ENCODE measurements at regions of chr14 and their contacts with region 1.

Region 1: GRCh38 chr14:77760381-77761246 is at the start of gene SNW1:
- DNase-seq: peak; percentile 96
- ATAC-seq: peak; percentile 96
- total RNA-seq, gene SNW1: 49.0 TPM

Region 2: GRCh38 chr14:77799863-77800730 is 39.5 kb after region 1 on chr14 and contains the start of gene ADCK1:
- intact Hi-C with region 1: loop called (anchors 5 kb)
- DNase-seq: peak; percentile 95
- ATAC-seq: peak; percentile 96
- total RNA-seq, gene ADCK1: 8.7 TPM

Region 3: DNA sequence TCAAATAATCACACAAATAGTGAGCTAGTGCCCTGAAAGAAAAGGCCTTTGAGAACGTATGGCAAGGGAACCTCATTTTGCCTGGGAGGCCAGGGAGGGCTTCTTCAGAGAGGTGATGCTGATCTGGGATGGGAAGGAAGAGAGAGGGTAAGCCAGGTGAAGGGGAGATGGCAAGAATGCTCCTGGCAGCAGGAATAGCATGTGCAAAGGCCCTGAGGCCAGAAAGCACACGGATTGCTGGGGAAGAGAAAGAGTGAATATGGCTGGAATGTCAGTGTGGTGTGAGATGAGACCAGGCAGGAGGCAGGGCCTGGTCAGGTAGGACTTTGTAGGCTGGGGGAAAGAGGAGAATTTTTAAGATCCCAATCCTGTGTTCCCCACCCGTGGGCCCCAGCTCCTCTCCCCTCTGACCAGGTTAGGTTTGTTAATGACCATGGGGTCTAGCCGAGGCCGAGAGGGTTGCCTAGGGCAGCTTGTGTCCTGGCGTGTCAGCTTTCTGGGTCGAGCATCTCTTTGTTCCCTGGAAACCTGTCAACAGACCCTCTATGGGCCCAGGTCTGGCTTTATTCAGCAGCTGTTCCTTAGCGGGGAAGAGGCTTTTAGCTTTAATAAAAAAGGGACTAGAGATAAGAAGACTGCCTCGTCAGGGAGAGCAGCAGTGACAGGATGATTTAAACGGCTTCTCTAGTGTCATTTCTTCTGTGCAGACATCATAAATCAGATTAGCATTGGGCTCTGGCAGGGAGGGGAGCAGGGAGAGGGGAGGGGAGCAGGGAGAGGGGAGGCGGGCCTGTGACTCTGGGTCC is 162.7 kb after region 1 on chr14:
- intact Hi-C with region 1: no loop called
- DNase-seq: no peak
- ATAC-seq: no peak

Measured in Right ventricle myocardium inferior (tissue), 1 donor.